ENCODE measurements at regions of chr1 and their contacts with region 1.

Region 1: DNA sequence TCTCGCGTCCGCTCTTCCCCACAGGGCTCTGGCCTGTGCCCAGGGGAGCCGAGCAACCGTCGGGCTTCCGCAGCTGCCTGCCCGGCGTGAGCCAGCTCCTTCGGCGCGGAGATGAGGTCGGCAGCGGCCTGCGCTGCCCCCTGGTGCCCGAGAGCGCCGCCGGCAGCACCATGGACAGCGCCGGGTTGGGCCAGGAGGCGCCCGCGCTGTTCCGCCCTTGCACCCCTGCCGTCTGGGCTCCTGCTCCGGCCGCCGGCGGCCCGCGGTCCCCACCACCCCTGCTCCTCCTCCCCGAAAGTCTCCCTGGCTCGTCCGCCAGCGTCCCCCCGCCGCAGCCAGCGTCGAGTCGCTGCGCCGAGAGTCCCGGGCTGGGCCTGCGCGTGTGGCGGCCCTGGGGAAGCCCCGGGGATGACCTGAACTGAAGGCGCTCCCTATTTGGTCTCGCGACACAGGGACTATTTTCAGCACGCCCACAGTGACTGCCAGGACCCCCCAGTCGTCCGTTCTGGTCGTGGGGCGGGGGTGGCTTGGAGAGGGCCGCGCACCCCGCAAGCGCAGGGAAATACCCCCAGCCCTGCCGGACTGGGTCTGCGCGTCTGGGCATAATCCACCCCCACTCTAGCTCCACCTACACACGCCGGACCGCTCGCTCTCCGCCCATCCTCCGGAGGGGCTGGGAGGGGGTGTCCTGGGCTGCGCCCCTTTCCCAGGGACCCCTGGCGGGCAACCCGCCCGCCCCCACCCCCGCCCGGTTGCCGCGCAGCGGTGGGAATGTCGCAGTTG is 1.3 kb downstream of the HES3 start:
- DNase-seq: peak; percentile 85 to 92
- ATAC-seq: peak; percentile 85 to 91 (median 87)
- H3K4me3 ChIP-seq: no peak overlapping the region
- H3K4me3 Mint-ChIP-seq: no peak overlapping the region
- H3K27ac ChIP-seq: no peak overlapping the region
- H3K27ac Mint-ChIP-seq: no peak overlapping the region
- H3K4me1 ChIP-seq: peaks cover 31% of the 10 kb centered on the region
- H3K4me1 Mint-ChIP-seq: peaks cover 5 to 16% of the 10 kb centered on the region in 2 donors
- H3K27me3 ChIP-seq: peaks cover 56% of the 10 kb centered on the region
- H3K27me3 Mint-ChIP-seq: peaks cover 20 to 43% of the 10 kb centered on the region in 2 donors
- CTCF ChIP-seq: peak; percentile 71

Region 2: DNA sequence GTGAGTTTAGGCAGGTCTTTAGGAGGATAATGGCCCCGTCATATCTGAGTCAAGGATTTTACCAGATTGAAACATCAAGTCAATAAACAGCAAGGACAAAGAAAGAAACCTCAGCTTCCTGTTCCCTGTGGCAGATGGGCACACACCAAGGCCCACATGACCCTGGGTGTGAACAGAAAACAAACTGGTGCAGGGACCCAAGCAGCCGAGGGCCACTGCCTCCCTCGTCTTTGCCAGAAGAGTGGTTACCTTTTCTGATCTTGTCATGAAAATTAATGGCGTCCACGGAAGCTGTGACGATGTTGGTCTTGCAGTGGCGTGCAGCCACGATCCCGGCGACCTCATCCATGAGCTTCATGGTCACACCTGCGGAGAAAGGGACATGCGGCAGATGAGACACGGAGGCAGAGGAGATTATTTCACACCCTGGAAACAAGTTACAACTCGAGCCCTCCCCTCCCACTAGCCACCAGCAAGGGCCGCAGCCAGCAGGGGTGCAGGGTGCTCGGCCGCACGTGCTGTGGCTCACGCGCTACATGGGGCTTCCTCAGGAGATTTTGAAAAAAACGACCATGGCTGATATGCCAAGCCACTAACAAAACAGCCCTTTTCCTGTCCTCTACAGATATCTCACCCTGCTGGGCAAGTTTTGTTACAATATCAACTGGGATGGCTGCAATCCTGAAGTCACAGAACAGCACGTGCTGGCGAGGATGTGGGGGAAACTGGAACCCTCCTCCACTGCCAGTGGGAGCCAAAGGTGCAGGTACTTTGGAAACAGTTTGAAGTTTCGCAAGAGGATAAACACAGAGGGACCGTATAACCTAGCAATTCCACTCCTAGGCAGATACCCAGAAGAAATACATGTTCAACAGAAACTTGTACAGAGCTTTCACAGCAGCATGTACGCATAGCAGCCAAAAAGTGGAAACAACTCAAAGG is 49.6 kb after region 1 on chr1:
- intact Hi-C with region 1: loop called (anchors 5 kb)
- DNase-seq: peak; percentile 53 to 59
- ATAC-seq: peak; percentile 64 to 76 (median 70)
- H3K4me3 ChIP-seq: no peak overlapping the region
- H3K4me3 Mint-ChIP-seq: peak overlapping the region; percentile 82
- H3K27ac ChIP-seq: peak overlapping the region; percentile 81
- H3K27ac Mint-ChIP-seq: peak overlapping the region; percentile 90 to 91
- H3K4me1 ChIP-seq: peaks cover 59% of the 10 kb centered on the region
- H3K4me1 Mint-ChIP-seq: peaks cover 50 to 54% of the 10 kb centered on the region in 2 donors
- H3K27me3 ChIP-seq: no peaks in the 10 kb centered on the region
- H3K27me3 Mint-ChIP-seq: no peaks in the 10 kb centered on the region
- CTCF ChIP-seq: no peak

Region 3: GRCh38 chr1:6401673-6402072 is 156.4 kb after region 1 on chr1:
- intact Hi-C with region 1: loop called (anchors 1 kb)
- DNase-seq: no peak
- ATAC-seq: no peak
- H3K4me3 ChIP-seq: no peak overlapping the region
- H3K4me3 Mint-ChIP-seq: no peak overlapping the region
- H3K27ac ChIP-seq: no peak overlapping the region
- H3K27ac Mint-ChIP-seq: no peak overlapping the region
- H3K4me1 ChIP-seq: no peaks in the 10 kb centered on the region
- H3K4me1 Mint-ChIP-seq: peaks cover 0 to 12% of the 10 kb centered on the region in 2 donors
- H3K27me3 ChIP-seq: peaks cover 4% of the 10 kb centered on the region
- H3K27me3 Mint-ChIP-seq: peaks cover 10% of the 10 kb centered on the region in 2 donors
- CTCF ChIP-seq: no peak